BJ (cell line): ENCODE measurements at regions of chr12 and their contacts with region 1.

Region 1: DNA sequence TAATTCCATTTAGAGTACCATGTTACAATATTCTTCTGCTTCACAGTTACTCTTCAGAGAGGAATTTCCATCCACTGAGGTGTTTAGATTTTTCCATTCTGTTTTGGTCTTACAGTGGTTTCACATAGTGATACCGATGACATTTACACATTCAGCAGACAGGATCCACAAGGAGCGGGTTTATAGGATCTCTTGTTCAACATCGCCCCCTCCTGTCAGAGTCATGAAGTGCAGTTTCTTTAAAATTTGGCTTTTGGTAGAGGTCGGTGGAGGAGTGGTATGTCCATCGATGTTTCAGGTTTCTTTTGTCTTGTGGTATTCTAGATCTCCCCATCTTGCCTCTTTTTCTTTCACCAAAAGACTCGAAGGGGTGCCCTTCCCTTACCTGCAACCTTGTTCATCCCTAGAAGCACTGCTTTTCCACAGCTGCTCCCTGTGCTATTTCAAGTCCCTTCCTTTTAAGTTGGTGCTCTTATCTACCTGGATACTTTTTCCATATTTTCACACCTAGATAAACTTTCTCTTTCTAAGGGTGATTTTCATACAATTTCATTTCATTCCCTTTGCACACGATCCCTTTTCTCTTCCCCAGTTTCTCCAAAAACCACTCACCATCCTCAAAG is 181.3 kb downstream of the ITPR2 start:
- DNase-seq: no peak
- H3K4me3 ChIP-seq: no peak overlapping the region
- H3K27me3 ChIP-seq: no peaks in the 10 kb centered on the region
- CTCF ChIP-seq: peak; percentile 75

Region 2: GRCh38 chr12:26097046-26097878 is 554.4 kb before region 1 on chr12:
- CTCF ChIA-PET with region 1: interaction called, 20 read pairs
- POLR2A ChIA-PET with region 1: no interaction called
- DNase-seq: peak; percentile 25
- H3K4me3 ChIP-seq: no peak overlapping the region
- H3K27me3 ChIP-seq: no peaks in the 10 kb centered on the region
- CTCF ChIP-seq: peak; percentile 96

Region 3: DNA sequence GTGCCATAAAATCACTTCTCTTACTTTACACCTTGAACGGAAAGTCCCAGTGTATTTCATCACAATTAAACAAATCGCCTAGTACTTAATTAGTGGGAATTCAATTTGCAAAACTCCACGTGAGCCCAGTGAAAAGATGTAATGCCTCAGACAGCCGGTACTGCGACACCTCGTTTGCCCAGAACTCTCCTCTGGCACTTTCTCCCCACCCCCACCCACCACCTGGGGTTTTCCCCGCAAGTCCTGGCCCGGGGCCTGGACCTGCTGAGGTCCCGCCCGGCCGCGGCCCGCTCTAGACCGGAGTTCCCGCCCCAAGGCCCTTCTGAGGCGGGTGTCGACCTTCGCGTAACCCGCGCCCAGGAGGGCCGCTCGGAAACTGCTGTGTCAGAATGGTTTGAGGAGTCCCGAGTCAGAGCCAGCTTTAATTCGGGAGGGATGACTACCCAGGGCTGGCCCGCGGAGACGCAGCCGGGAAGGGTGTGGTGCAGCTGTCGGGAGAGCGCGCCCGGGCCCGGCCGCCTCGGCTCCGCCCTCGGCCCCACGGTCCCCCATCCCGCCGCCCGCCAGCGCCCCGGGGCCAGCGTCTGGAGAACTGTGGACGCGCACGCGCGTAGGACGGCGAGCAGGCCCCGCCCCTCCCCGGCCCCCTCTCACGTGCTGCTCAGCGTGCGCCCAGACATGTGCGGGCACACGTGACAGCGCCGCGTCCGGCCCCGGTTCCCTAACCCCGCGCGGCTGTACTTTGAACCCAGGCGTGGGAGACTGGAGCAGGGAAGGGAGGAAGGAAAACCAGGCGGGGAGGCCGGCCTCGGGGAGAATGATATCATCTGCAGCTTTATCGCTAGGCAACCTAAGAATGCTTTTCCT is 537.6 kb before region 1 on chr12:
- CTCF ChIA-PET with region 1: interaction called, 14 read pairs
- POLR2A ChIA-PET with region 1: no interaction called
- DNase-seq: peak; percentile 64
- H3K4me3 ChIP-seq: peak overlapping the region; percentile 57
- H3K27me3 ChIP-seq: no peaks in the 10 kb centered on the region
- CTCF ChIP-seq: peak; percentile 28; the same call in 1 of the 2 replicates

Region 4: DNA sequence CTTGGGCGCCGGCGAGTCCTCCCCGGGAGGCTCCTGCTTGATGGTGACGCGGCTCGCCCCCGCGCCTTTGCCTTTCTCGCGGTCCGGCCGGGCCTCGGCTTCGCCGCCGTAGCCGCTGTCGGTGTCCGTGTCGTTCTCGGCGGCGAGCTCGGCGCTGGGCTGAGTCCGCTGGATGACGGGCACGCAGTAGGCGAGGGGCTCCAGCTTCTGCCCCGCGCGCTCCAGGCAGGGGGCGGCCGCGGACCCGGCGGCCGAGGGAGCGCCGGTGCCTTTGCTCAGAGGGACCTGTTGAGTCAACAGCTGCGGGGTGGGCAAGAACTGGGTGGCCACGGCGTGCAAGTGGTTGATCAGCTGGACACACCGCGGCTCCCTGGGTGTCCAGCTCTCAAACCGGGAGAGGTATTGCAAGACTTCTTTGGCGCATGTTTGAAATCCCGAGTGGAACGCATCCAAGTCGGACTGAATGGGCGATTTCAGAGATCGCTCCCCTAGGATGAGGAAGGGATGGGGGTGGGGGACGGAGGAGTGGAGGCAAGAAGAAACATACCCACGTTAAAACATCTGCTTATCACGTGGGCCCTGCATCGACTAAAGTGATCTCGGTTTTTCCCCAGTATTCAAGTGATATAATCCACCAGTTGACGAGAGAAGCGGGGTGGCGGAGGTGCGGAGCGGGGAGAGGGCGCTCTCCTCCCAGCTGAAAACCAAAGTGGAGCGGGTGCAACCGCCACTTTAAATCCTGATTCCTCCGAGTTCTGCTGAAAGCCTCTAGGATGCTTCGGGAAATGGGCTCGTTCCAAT is 528.8 kb before region 1 on chr12:
- CTCF ChIA-PET with region 1: interaction called, 15 read pairs
- POLR2A ChIA-PET with region 1: no interaction called
- DNase-seq: no peak
- H3K4me3 ChIP-seq: peak overlapping the region; percentile 56
- H3K27me3 ChIP-seq: no peaks in the 10 kb centered on the region
- CTCF ChIP-seq: peak; percentile 44

Region 5: DNA sequence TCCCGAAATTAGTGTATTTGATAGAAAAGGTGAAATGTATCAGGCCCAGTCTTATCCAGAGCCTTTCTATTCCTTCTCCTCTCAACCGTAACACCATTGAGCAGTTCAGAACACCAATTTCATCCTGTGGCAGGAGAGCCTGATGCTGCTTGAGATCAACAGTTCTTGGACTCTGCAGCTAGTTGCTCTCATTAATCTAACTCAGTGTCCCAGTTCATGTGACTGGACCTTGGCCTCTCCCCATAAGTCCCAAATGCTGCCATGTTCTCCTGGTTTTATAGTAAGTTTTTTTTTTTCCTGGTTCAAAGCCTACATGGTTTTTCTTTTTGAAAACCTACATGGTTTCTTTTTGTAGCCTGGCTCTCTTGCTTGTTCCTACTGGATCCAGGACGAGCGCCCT is 112.5 kb before region 1 on chr12:
- CTCF ChIA-PET with region 1: no interaction called
- POLR2A ChIA-PET with region 1: no interaction called
- DNase-seq: no peak
- H3K4me3 ChIP-seq: no peak overlapping the region
- H3K27me3 ChIP-seq: no peaks in the 10 kb centered on the region
- CTCF ChIP-seq: no peak

Region 6: GRCh38 chr12:26614020-26614616 is 37.6 kb before region 1 on chr12:
- CTCF ChIA-PET with region 1: no interaction called
- POLR2A ChIA-PET with region 1: no interaction called
- DNase-seq: no peak
- H3K4me3 ChIP-seq: no peak overlapping the region
- H3K27me3 ChIP-seq: no peaks in the 10 kb centered on the region
- CTCF ChIP-seq: peak; percentile 58

Region 7: GRCh38 chr12:26629864-26630263 is 21.8 kb before region 1 on chr12:
- CTCF ChIA-PET with region 1: interaction called, 24 read pairs
- POLR2A ChIA-PET with region 1: no interaction called
- DNase-seq: no peak
- H3K4me3 ChIP-seq: no peak overlapping the region
- H3K27me3 ChIP-seq: no peaks in the 10 kb centered on the region
- CTCF ChIP-seq: peak; percentile 54